Activated CD4-positive, alpha-beta memory T cell treated with anti-CD3 and anti-CD28 coated beads for 36 hours (primary cell): ENCODE measurements at regions of chr3 and their contacts with region 1.

Region 1: DNA sequence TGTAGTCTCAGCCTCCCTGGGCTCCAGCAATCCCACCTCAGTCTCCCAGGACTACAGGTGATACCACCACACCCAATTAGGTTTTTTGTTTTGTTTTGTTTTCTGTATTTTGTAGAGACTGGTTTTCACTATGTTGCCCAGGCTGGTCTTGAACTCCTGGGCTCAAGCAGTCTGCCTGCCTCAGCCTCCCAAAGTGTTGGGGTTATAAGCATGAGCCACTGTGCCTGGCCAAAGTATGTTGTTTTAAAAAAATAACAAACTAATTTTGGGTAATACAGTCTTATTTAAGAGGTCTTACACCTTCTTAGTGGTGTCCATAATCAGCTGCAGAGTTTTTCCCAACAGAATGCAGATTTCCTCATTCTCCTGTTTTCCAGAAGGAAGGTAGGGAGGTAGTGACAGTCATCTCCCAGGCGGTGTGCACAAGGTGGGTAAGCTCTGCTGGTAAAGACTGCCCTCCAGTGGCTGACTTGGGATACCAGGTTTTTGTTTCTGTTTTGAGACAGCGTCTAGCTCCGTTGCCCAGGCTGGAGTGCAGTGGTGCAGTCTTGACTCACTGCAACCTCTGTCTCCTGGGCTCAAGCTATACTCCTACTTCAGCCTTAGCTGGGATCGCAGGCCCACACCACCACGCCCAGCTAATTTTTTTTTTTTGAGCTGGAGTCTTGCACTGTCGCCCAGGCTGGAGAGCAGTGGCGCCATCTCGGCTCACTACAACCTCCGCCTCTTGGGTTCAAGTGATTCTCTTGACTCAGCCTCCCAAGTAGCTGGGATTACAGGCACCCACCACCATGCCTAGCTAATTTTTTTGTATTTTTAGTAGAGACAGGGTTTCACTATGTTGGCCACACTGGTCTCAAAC is 58.4 kb downstream of the MAP6D1 start:
- DNase-seq: peak; percentile 81
- H3K4me3 Mint-ChIP-seq: no peak overlapping the region
- H3K27ac Mint-ChIP-seq: no peak overlapping the region
- H3K4me1 Mint-ChIP-seq: peaks cover 5% of the 10 kb centered on the region
- H3K27me3 Mint-ChIP-seq: no peaks in the 10 kb centered on the region

Region 2: GRCh38 chr3:183172051-183172639 is 594.8 kb before region 1 on chr3:
- CTCF ChIA-PET with region 1: no interaction called
- POLR2A ChIA-PET with region 1: no interaction called
- intact Hi-C with region 1: no loop called
- DNase-seq: no peak
- H3K4me3 Mint-ChIP-seq: no peak overlapping the region
- H3K27ac Mint-ChIP-seq: no peak overlapping the region
- H3K4me1 Mint-ChIP-seq: no peaks in the 10 kb centered on the region
- H3K27me3 Mint-ChIP-seq: peaks cover 11% of the 10 kb centered on the region

Region 3: DNA sequence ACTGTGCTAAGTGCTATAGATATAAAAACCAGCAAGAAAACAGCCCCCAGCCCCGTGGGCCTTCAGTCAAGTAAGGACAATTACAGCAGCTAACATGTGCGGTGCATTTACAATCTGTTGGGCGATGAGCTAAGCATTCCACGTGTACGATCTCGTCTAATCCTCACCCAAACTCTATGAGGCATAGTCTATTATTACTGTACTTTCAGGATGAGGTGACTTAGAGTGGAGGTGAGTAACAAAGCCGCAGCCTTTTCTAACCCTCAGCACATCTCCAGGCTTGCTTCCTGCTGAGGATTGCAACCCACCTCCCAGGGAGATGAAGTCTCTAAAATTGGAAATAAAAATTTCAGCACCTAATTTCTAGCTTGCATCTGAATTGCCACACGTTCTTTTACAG is 285.4 kb before region 1 on chr3:
- CTCF ChIA-PET with region 1: interaction called, 23 read pairs
- POLR2A ChIA-PET with region 1: no interaction called
- intact Hi-C with region 1: no loop called
- DNase-seq: peak; percentile 49
- H3K4me3 Mint-ChIP-seq: no peak overlapping the region
- H3K27ac Mint-ChIP-seq: no peak overlapping the region
- H3K4me1 Mint-ChIP-seq: peaks cover 6% of the 10 kb centered on the region
- H3K27me3 Mint-ChIP-seq: no peaks in the 10 kb centered on the region

Region 4: DNA sequence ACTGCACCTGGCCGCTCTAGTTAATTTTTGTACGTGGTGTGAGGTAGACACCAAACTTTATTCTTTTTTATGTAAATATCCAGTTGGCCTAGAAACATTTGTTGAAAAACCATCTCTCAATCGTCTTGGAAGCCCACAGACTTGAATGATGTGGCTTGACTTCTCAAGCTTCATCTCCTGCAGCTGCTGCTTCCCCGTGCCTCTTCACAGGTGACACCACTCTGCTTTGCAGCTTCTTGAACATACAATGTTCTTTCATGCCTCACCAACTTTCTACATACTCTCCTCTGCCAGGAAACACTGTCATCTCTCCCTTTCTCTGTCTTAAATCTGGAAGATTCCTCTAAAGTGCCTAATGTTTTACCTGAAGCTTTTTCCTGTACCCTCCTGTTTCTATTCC is 22.9 kb after region 1 on chr3:
- CTCF ChIA-PET with region 1: interaction called, 10 read pairs
- POLR2A ChIA-PET with region 1: no interaction called
- intact Hi-C with region 1: no loop called
- DNase-seq: no peak
- H3K4me3 Mint-ChIP-seq: no peak overlapping the region
- H3K27ac Mint-ChIP-seq: no peak overlapping the region
- H3K4me1 Mint-ChIP-seq: no peaks in the 10 kb centered on the region
- H3K27me3 Mint-ChIP-seq: no peaks in the 10 kb centered on the region

Region 5: DNA sequence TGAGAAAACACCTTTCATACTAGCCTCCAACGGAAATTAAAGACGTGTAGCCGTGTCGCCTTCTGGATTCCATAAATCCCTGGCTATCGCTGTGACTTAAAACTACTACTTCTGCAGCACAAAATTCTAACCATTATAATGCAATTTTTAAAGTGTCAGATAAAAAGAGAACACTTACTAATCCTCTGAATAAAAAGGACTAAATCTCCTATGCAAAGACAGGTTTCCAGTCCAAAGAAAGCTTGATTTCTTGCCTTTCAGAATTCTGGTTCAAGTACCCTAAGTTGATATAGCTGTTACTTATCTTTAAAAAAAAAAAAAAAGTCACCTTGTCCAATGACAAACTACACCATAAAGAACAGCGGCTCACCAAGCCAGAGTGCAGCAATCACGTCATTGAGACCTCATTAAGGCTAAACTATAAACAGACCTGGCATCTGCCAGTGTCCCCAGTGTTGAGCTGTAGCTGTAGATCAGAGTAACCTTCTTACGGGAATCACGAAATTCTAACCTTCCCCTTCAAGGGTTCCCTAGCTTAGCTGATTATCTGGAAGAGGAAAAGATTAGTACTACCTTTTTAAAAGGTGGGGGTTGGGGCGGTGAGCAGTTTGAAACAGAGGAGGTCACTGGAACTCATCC is 248.5 kb after region 1 on chr3:
- CTCF ChIA-PET with region 1: no interaction called
- POLR2A ChIA-PET with region 1: no interaction called
- intact Hi-C with region 1: no loop called
- DNase-seq: no peak
- H3K4me3 Mint-ChIP-seq: no peak overlapping the region
- H3K27ac Mint-ChIP-seq: no peak overlapping the region
- H3K4me1 Mint-ChIP-seq: peaks cover 23% of the 10 kb centered on the region
- H3K27me3 Mint-ChIP-seq: peaks cover 1% of the 10 kb centered on the region